HepG2 (cell line): ENCODE measurements at regions of chr1 and their contacts with region 1.

Region 1: GRCh38 chr1:156659994-156660751 is 17.0 kb downstream of the NES start:
- DNase-seq: peak; percentile 95
- ATAC-seq: peak; percentile 65
- H3K4me3 ChIP-seq: peak overlapping the region; percentile 75 to 82 (median 80)
- H3K27ac ChIP-seq: peak overlapping the region; percentile 95
- H3K4me1 ChIP-seq: peaks cover 80% of the 10 kb centered on the region
- H3K27me3 ChIP-seq: no peaks in the 10 kb centered on the region; a peak in 1 of 5 replicates
- CTCF ChIP-seq: peak; percentile 97
- EP300 ChIP-seq: peak in 1 of 2 experiments; percentile 48; a peak in 1 of 4 replicates
- POLR2A ChIP-seq: peak in 1 of 2 experiments; percentile 95; a peak in 2 of 4 replicates
- RAD21 ChIP-seq: peak; percentile 97

Region 2: DNA sequence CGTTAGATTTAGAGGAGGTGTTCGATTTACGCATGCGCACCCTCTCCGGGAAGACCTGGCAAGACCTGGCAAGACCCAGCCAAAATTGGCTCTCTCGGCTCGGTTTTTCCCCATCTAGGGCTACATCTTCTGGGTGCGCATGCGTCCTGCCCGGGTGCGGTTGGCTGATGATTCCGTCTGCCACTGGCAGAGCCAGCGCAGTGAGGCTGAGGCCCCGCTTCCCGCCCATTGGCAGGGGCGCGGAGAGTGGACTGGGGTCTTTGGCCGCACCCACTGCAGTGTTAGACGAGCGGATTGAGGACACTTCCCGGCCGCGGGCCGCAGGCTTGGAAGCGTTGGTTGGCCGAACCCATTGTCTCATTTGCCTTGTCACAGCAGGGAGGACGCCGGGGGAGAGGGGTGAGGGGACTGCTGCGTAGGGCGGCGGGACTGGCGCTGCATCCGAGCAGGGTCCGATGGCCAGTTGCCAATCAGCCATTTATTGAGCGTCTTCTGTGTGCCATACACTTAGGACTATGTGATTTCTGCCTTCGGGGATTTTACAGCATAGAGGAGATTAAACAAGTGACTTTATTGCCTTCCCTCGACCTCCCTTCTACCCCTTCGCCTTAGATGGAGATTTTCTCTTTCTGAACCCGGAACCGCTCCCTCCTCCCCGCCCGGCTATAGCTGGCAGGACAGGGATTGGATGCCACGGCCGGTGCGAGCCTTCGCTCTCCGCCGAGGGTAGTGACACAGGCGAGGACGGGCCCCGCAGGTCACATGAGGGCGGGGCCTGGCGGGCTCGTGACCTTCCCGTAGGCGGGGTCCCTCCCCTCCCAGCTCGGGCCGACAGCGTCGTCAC is 203.3 kb before region 1 on chr1:
- CTCF ChIA-PET with region 1: no interaction called
- POLR2A ChIA-PET with region 1: interaction called, 10 read pairs
- in situ Hi-C with region 1: no loop called
- intact Hi-C with region 1: no loop called
- DNase-seq: peak; percentile 96
- ATAC-seq: peak; percentile 91
- H3K4me3 ChIP-seq: peak overlapping the region; percentile 54 to 75 (median 55); a peak in 5 of 6 replicates
- H3K27ac ChIP-seq: peak overlapping the region; percentile 85
- H3K4me1 ChIP-seq: peaks cover 60% of the 10 kb centered on the region
- H3K27me3 ChIP-seq: no peaks in the 10 kb centered on the region
- CTCF ChIP-seq: no peak
- EP300 ChIP-seq: no peak; a peak in 1 of 4 replicates
- POLR2A ChIP-seq: peak; percentile 60 to 64
- RAD21 ChIP-seq: peak; percentile 3; the same call in 1 of the 2 replicates

Region 3: GRCh38 chr1:156591432-156592157 is 68.6 kb before region 1 on chr1 and contains the start of gene NAXE:
- CTCF ChIA-PET with region 1: no interaction called
- POLR2A ChIA-PET with region 1: interaction called, 10 read pairs
- in situ Hi-C with region 1: no loop called
- intact Hi-C with region 1: no loop called
- DNase-seq: peak; percentile 36
- ATAC-seq: peak; percentile 94
- H3K4me3 ChIP-seq: peak within 1 kb of the TSS; percentile 73 to 86 (median 81)
- H3K27ac ChIP-seq: peak within 1 kb of the TSS; percentile 68
- H3K4me1 ChIP-seq: peaks cover 21% of the 10 kb centered on the region
- H3K27me3 ChIP-seq: no peaks in the 10 kb centered on the region
- CTCF ChIP-seq: no peak
- EP300 ChIP-seq: no peak
- POLR2A ChIP-seq: peak; percentile 88 to 94
- RAD21 ChIP-seq: peak; percentile 37
- total RNA-seq, gene NAXE: 37.9 and 59.4 TPM in 2 replicates

Region 4: DNA sequence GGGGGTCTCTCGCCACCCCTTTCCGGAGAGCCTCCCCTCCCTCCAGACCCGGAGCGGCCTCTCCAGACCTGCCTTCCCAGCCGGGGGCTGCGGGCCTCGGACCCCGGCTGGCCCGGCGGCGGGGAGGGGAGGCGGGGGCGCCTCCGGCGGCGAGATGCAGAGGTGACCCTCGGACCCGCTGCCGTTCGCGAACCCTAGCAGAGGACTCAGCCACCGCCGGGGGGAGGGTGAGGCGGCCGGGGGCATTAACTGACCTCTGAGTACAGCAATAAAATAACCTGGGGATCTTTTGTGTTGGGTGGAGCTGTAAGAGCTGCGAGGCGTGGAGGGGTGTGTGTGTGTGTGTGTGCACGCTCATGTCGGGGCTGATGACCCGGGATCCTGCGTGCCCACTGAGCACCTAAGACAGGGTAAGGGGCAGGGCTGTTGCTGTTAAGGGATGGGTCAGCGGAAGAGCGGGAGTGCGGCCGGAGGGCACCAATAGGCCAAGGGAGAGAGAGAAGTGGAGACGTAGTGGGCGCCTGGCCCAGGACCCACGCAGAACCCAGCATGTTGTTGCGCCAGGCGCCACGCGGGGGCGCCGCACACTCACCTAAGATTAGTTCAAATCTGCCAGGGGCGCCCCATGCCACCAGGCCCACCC is 34.6 kb before region 1 on chr1:
- CTCF ChIA-PET with region 1: interaction called, 13 read pairs
- POLR2A ChIA-PET with region 1: interaction called, 7 read pairs
- in situ Hi-C with region 1: no loop called
- intact Hi-C with region 1: loop called (anchors 1 kb)
- DNase-seq: no peak
- ATAC-seq: peak; percentile 48
- H3K4me3 ChIP-seq: peak overlapping the region; percentile 43 to 69 (median 44); a peak in 5 of 6 replicates
- H3K27ac ChIP-seq: no peak overlapping the region
- H3K4me1 ChIP-seq: peaks cover 34% of the 10 kb centered on the region
- H3K27me3 ChIP-seq: peaks cover 13 to 40% of the 10 kb centered on the region in 2 experiments
- CTCF ChIP-seq: peak; percentile 79
- EP300 ChIP-seq: no peak
- POLR2A ChIP-seq: no peak
- RAD21 ChIP-seq: peak; percentile 48; the same call in 1 of the 2 replicates

Region 5: GRCh38 chr1:156639601-156640101 is 20.5 kb before region 1 on chr1:
- CTCF ChIA-PET with region 1: no interaction called
- POLR2A ChIA-PET with region 1: no interaction called
- in situ Hi-C with region 1: no loop called
- intact Hi-C with region 1: no loop called
- DNase-seq: no peak
- ATAC-seq: peak; percentile 44
- H3K4me3 ChIP-seq: no peak overlapping the region
- H3K27ac ChIP-seq: no peak overlapping the region
- H3K4me1 ChIP-seq: peaks cover 17% of the 10 kb centered on the region
- H3K27me3 ChIP-seq: peaks cover 4 to 21% of the 10 kb centered on the region in 2 experiments; a peak in 3 of 5 replicates
- CTCF ChIP-seq: no peak
- EP300 ChIP-seq: no peak
- POLR2A ChIP-seq: no peak; a peak in 1 of 4 replicates
- RAD21 ChIP-seq: no peak

Region 6: GRCh38 chr1:156677616-156678596 is 17.7 kb after region 1 on chr1:
- CTCF ChIA-PET with region 1: interaction called, 166 read pairs
- POLR2A ChIA-PET with region 1: interaction called, 189 read pairs
- in situ Hi-C with region 1: no loop called
- intact Hi-C with region 1: loop called (anchors 1 kb)
- DNase-seq: peak; percentile 72
- ATAC-seq: peak; percentile 60
- H3K4me3 ChIP-seq: peak overlapping the region; percentile 40 to 63 (median 58); a peak in 5 of 6 replicates
- H3K27ac ChIP-seq: no peak overlapping the region
- H3K4me1 ChIP-seq: peaks cover 62% of the 10 kb centered on the region
- H3K27me3 ChIP-seq: peaks cover 2 to 32% of the 10 kb centered on the region in 2 experiments
- CTCF ChIP-seq: peak; percentile 96
- EP300 ChIP-seq: no peak
- POLR2A ChIP-seq: no peak
- RAD21 ChIP-seq: peak; percentile 92

Region 7: GRCh38 chr1:156689035-156689952 is 29.1 kb after region 1 on chr1:
- CTCF ChIA-PET with region 1: interaction called, 13 read pairs
- POLR2A ChIA-PET with region 1: interaction called, 8 read pairs
- in situ Hi-C with region 1: no loop called
- intact Hi-C with region 1: no loop called
- DNase-seq: peak; percentile 75
- ATAC-seq: peak; percentile 93
- H3K4me3 ChIP-seq: peak overlapping the region; percentile 41 to 65 (median 43); a peak in 5 of 6 replicates
- H3K27ac ChIP-seq: no peak overlapping the region
- H3K4me1 ChIP-seq: peaks cover 40% of the 10 kb centered on the region
- H3K27me3 ChIP-seq: peaks cover 18 to 49% of the 10 kb centered on the region in 2 experiments; a peak in 4 of 5 replicates
- CTCF ChIP-seq: peak; percentile 98
- EP300 ChIP-seq: no peak
- POLR2A ChIP-seq: no peak
- RAD21 ChIP-seq: peak; percentile 87

Region 8: GRCh38 chr1:156740679-156741612 is 80.8 kb after region 1 on chr1 and contains the start of gene MRPL24:
- CTCF ChIA-PET with region 1: no interaction called
- POLR2A ChIA-PET with region 1: interaction called, 10 read pairs
- in situ Hi-C with region 1: no loop called
- intact Hi-C with region 1: no loop called
- DNase-seq: peak; percentile 99
- ATAC-seq: peak; percentile 91
- H3K4me3 ChIP-seq: peak within 1 kb of the TSS; percentile 78 to 93 (median 81)
- H3K27ac ChIP-seq: peak within 1 kb of the TSS; percentile 83
- H3K4me1 ChIP-seq: peaks cover 23% of the 10 kb centered on the region
- H3K27me3 ChIP-seq: no peaks in the 10 kb centered on the region; a peak in 1 of 5 replicates
- CTCF ChIP-seq: peak; percentile 33; the same call in 1 of the 2 replicates
- EP300 ChIP-seq: peak in 1 of 2 experiments; percentile 70; a peak in 3 of 4 replicates
- POLR2A ChIP-seq: peak; percentile 66 to 85
- RAD21 ChIP-seq: 0 out of 2 replicates have a peak, but pooled peaks have one; percentile 35
- total RNA-seq, gene MRPL24: 42.9 and 45.7 TPM in 2 replicates